Posterior vena cava (tissue), 2 donors: ENCODE measurements at regions of chr9 and their contacts with region 1.

Region 1: GRCh38 chr9:81671880-81672280 is 17.5 kb downstream of the TLE1 start:
- DNase-seq: peak; percentile 94

Region 2: DNA sequence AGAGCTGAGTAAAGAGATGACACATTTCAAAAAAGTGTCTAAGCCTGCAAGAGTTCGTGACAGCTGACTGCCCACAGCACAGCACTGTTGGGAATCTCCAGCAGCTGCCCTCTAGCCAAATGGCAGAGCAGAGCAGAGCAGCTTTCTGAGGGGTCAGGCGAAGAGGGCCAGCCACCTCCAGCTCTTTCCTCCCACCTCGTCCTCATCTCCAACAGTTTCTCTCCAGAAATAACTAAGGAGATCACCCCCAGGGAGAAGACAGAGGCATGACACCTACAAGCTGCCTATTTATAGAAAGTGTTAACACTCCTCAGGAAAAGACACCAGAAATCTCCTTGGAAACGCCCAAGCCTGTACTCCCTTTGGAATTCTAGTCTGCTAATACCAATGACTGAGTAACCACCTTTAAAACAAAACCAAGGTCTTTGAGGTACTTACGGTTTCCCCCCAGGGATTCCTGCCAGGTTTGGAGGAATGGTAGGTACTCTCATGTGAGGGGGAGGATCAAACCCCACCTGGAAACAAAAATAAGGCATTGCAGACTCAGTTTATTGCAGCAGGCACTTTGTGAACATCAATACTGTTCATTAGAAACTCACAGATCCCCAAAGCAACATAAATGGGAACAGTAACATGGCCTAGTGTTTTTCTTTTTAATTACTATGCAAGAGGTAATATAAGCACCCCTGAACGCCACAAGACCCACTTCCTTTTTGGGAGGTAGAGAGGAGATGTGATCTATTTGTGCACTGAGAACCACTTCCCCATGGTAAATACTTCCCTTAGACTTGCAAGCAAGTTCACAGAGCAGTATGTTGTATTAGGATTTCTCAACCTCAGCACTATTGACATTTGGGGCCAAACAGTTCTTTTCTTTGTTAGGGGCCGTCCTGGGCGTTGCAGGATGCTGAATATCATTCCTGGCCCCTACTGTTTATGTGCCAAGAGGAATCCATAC is 61.8 kb before region 1 on chr9:
- intact Hi-C with region 1: loop called in 1 of 2 experiments (anchors 10 kb)
- DNase-seq: no peak